Gastrocnemius medialis (tissue), 4 donors: ENCODE measurements at regions of chr18 and their contacts with region 1.

Region 1: GRCh38 chr18:6885992-6886796 is 156.7 kb downstream of the ARHGAP28 start:
- DNase-seq: peak in 1 of 2 donors; percentile 15
- ATAC-seq: peak; percentile 56 to 76
- H3K4me3 ChIP-seq: no peak overlapping the region
- H3K27ac ChIP-seq: no peak overlapping the region
- H3K4me1 ChIP-seq: peaks cover 0 to 5% of the 10 kb centered on the region in 2 donors
- H3K27me3 ChIP-seq: no peaks in the 10 kb centered on the region
- CTCF ChIP-seq: peak; percentile 54 to 75 (median 70)
- POLR2A ChIP-seq: no peak

Region 2: GRCh38 chr18:5879479-5879882 is 1006.7 kb before region 1 on chr18:
- in situ Hi-C with region 1: loop called (anchors 10 to 25 kb)
- intact Hi-C with region 1: no loop called
- DNase-seq: no peak
- ATAC-seq: no peak
- H3K4me3 ChIP-seq: no peak overlapping the region
- H3K27ac ChIP-seq: no peak overlapping the region
- H3K4me1 ChIP-seq: no peaks in the 10 kb centered on the region
- H3K27me3 ChIP-seq: peaks cover 0 to 8% (median 0%) of the 10 kb centered on the region in 3 donors
- CTCF ChIP-seq: peak in 3 of 5 experiments; percentile 43 to 63 (median 51)
- POLR2A ChIP-seq: no peak

Region 3: GRCh38 chr18:5890331-5891183 is 995.6 kb before region 1 on chr18:
- in situ Hi-C with region 1: loop called in 3 of 4 experiments (anchors 10 to 25 kb)
- intact Hi-C with region 1: no loop called
- DNase-seq: no peak
- ATAC-seq: peak; percentile 47 to 74
- H3K4me3 ChIP-seq: peak overlapping the region; percentile 42 to 60 (median 48)
- H3K27ac ChIP-seq: no peak overlapping the region
- H3K4me1 ChIP-seq: peaks cover 0 to 8% of the 10 kb centered on the region in 2 donors
- H3K27me3 ChIP-seq: peaks cover 23 to 50% (median 41%) of the 10 kb centered on the region in 3 donors
- CTCF ChIP-seq: peak in 4 of 5 experiments; percentile 28 to 70 (median 62)
- POLR2A ChIP-seq: no peak

Region 4: DNA sequence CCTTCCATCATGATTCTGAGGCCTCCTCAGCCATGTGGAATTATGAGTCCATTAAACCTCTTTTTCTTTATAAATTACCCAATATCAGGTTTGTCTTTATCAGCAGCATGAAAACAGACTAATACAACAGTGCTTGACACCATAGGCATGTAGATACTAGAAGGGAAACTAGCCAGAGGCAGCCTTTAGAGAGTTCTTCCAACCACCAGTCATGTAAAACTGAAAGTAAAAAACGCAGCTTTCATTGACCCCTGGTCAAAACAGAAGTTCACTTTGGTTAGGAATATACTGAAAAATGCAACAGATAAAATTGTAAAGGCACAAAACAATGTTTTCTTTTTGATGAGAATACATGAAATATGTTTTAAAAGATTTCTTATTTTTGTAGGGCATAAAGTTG is 348.7 kb before region 1 on chr18:
- in situ Hi-C with region 1: loop called in 3 of 4 experiments (anchors 5 to 10 kb)
- intact Hi-C with region 1: no loop called
- DNase-seq: no peak
- ATAC-seq: no peak
- H3K4me3 ChIP-seq: no peak overlapping the region
- H3K27ac ChIP-seq: no peak overlapping the region
- H3K4me1 ChIP-seq: peaks cover 0 to 6% of the 10 kb centered on the region in 2 donors
- H3K27me3 ChIP-seq: no peaks in the 10 kb centered on the region
- CTCF ChIP-seq: no peak
- POLR2A ChIP-seq: no peak

Region 5: GRCh38 chr18:6835345-6835744 is 50.8 kb before region 1 on chr18:
- in situ Hi-C with region 1: no loop called
- intact Hi-C with region 1: no loop called
- DNase-seq: no peak
- ATAC-seq: no peak
- H3K4me3 ChIP-seq: no peak overlapping the region
- H3K27ac ChIP-seq: no peak overlapping the region
- H3K4me1 ChIP-seq: no peaks in the 10 kb centered on the region
- H3K27me3 ChIP-seq: no peaks in the 10 kb centered on the region
- CTCF ChIP-seq: no peak
- POLR2A ChIP-seq: no peak